ENCODE measurements at regions of chr11 and their contacts with region 1.

Region 1: DNA sequence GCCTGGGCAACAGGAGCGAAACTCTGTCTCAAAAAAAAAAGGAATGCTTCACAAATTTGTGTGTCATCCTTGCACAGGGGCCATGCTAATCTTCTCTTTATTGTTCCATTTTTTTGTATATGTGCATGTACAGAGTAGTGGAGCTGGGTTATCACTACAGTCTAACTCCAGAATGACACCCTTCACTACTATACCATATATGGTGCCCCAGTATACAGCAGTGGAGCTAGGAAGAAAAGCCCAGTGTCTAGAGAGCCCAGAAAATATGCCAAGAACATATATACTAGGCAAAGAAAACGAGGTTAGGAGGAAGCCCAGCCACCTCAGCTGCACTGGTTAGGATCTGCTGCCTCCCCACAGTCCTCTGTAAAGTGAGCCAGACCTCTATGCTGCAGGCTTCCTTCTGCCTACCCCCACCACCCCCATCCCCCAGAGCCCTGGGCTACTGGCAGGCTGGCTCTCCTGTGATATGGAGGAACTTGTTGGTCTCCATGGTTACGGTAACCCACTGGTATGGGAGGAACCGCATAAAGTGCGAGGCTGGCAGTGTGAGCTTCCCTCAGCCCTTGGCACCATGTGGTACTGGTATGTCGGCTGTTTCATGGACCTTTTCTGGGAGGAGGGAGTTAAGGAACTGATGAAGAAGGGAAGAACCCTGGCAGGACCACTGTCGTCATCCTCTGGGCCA is 34.3 kb downstream of the RCOR2 start:
- DNase-seq: no peak
- ATAC-seq: peak; percentile 51
- H3K4me3 Mint-ChIP-seq: no peak overlapping the region
- H3K27ac Mint-ChIP-seq: peak overlapping the region; percentile 55
- H3K4me1 Mint-ChIP-seq: peaks cover 73% of the 10 kb centered on the region
- H3K27me3 Mint-ChIP-seq: no peaks in the 10 kb centered on the region

Region 2: DNA sequence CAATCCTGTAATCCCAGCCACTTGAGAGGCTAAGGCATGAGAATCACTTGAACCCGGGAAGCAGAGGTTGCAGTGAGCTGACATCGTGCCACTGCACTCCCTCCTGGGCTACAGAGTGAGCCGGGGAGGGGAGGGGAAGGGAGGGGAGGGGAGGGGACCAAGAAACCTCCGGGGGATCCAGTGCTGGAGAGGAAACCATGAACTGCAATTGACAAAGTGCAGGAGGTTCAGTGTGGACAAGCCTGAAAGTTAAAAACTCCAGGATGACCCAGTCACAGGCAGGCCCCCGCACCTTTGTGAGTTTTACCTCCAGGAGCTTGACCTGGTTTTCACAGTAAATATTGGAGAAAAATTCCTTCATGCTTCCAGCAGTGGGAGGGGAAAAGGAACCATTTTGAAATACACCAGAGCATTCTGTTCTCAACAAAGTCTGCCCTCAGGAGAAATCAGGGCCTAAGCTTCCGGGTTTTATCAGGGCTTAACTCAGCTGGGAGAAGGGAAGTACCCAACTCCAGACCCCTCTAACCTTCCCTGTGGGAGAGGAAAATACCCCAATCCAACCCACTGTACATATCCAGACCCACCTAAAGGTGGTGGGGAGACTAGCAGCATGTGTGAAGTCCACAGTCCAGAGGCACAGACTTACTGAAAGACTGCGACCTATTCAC is 98.6 kb before region 1 on chr11:
- CTCF ChIA-PET with region 1: no interaction called
- POLR2A ChIA-PET with region 1: no interaction called
- DNase-seq: no peak
- ATAC-seq: no peak
- H3K4me3 Mint-ChIP-seq: no peak overlapping the region
- H3K27ac Mint-ChIP-seq: no peak overlapping the region
- H3K4me1 Mint-ChIP-seq: no peaks in the 10 kb centered on the region
- H3K27me3 Mint-ChIP-seq: peaks cover 12% of the 10 kb centered on the region

Region 3: DNA sequence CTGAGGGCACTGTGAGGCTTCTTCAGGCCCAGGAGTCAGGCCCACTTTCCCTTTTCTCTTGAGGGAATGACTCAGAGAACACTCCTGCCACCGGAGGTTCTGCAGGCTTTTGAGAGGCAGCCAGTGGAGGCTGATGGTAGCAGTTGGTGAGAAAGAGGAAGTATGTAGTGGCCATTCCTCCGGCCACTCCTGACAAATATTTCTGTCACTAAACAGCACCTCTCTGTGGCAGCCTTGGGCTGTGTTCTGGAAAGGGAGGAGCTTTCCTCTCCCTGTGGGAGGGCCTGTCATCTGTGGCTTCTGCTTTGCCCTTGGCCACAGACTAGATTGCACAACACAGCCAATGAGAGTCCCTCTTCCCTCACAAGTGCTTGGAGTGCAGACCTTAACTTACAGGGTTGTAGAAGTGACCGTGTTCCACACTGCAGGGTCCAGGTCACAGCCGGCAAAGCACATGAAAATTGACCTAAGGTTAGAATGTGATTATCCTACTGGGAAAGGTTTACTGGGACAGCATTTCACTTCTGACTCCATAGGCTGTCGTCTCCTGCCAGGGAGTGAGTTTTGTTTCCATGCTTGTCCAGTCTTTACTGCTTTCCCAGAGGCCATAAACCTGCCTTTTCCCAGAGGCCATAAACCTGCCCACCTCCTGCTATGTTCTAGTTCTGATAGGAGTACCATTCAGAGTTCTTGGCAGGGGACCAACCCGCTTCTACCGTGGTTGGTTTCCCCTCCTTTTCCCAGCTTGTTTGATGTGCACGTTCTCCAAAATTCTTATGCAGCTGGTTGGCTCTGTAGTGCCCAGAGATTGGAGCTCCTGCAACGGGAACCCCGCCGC is 10.5 kb before region 1 on chr11:
- CTCF ChIA-PET with region 1: interaction called, 14 read pairs
- POLR2A ChIA-PET with region 1: no interaction called
- DNase-seq: peak; percentile 69
- ATAC-seq: peak; percentile 80
- H3K4me3 Mint-ChIP-seq: peak overlapping the region; percentile 53
- H3K27ac Mint-ChIP-seq: peak overlapping the region; percentile 75
- H3K4me1 Mint-ChIP-seq: peaks cover 71% of the 10 kb centered on the region
- H3K27me3 Mint-ChIP-seq: no peaks in the 10 kb centered on the region

Measured in activated CD8-positive, alpha-beta T cell treated with anti-CD3 and anti-CD28 coated beads, Interleukin-2, amount 10 ng/mL, durations not matched to agents 7 days and 5 days (primary cell).